CD8-positive, alpha-beta T cell (primary cell): ENCODE measurements at regions of chr5 and their contacts with region 1.

Region 1: GRCh38 chr5:113330533-113331208 is 104.1 kb downstream of the TSSK1B start:
- DNase-seq: peak in 3 of 9 experiments; percentile 9 to 81 (median 66)
- ATAC-seq: peak; percentile 83
- H3K4me3 ChIP-seq: no peak overlapping the region
- H3K4me3 Mint-ChIP-seq: peak overlapping the region; percentile 35
- H3K27ac ChIP-seq: no peak overlapping the region
- H3K27ac Mint-ChIP-seq: peak overlapping the region; percentile 12
- H3K4me1 ChIP-seq: peaks cover 7% of the 10 kb centered on the region
- H3K4me1 Mint-ChIP-seq: peaks cover 19% of the 10 kb centered on the region
- H3K27me3 ChIP-seq: no peaks in the 10 kb centered on the region
- H3K27me3 Mint-ChIP-seq: peaks cover 2% of the 10 kb centered on the region
- CTCF ChIP-seq: peak; percentile 58

Region 2: DNA sequence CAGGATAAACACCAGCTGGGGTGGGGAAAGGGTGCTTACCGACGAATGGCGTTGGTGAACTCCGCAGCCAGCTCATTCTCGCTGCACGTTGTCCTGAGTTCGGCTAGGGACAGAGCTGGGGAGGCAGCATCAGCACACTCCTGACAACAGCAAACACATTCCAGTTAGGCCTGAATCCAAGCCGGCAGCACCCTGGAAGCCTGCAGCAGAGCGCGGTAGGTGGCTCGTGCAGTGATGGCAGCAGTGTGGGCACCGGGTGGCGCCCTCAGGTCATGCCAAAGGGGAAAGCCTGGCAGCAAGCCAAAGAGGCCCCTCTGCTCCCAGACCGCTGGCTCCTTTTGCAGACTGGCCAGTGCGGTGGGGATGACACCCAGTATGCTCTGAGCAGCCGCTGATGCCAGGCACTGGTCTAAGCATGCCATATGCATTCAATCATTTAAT is 287.2 kb before region 1 on chr5:
- CTCF ChIA-PET with region 1: interaction called, 46 read pairs
- POLR2A ChIA-PET with region 1: no interaction called
- intact Hi-C with region 1: loop called (anchors 1 kb)
- DNase-seq: peak in 6 of 9 experiments; percentile 16 to 71 (median 40)
- ATAC-seq: no peak
- H3K4me3 ChIP-seq: no peak overlapping the region
- H3K4me3 Mint-ChIP-seq: no peak overlapping the region
- H3K27ac ChIP-seq: no peak overlapping the region
- H3K27ac Mint-ChIP-seq: no peak overlapping the region
- H3K4me1 ChIP-seq: no peaks in the 10 kb centered on the region
- H3K4me1 Mint-ChIP-seq: peaks cover 5% of the 10 kb centered on the region
- H3K27me3 ChIP-seq: no peaks in the 10 kb centered on the region
- H3K27me3 Mint-ChIP-seq: no peaks in the 10 kb centered on the region
- CTCF ChIP-seq: peak; percentile 24

Region 3: DNA sequence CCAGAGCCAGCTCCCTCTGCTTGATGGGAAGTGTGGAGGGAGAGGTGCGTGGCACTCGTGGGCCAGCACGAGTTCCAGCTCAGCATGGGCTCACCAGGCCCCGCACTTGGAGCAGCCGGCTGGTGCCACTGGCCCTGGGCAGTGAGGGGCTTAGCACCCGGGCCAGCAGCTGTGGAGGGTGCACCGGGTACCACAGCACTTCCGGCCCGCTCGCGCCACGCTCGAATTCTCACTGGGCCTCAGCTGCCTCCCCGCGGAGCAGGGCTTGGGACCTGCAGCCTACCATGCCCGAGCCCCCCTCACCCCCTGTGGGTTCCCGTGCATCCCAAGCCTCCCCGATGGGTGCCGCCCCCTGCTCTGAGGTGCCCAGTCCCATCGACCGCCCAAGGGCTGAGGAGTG is 255.7 kb before region 1 on chr5:
- CTCF ChIA-PET with region 1: interaction called, 26 read pairs
- POLR2A ChIA-PET with region 1: no interaction called
- intact Hi-C with region 1: loop called in 1 of 2 experiments (anchors 1 kb)
- DNase-seq: no peak
- ATAC-seq: no peak
- H3K4me3 ChIP-seq: no peak overlapping the region
- H3K4me3 Mint-ChIP-seq: no peak overlapping the region
- H3K27ac ChIP-seq: no peak overlapping the region
- H3K27ac Mint-ChIP-seq: no peak overlapping the region
- H3K4me1 ChIP-seq: peaks cover 26% of the 10 kb centered on the region
- H3K4me1 Mint-ChIP-seq: peaks cover 45% of the 10 kb centered on the region
- H3K27me3 ChIP-seq: no peaks in the 10 kb centered on the region
- H3K27me3 Mint-ChIP-seq: no peaks in the 10 kb centered on the region
- CTCF ChIP-seq: no peak

Region 4: GRCh38 chr5:113232667-113233066 is 98.0 kb before region 1 on chr5:
- CTCF ChIA-PET with region 1: no interaction called
- POLR2A ChIA-PET with region 1: no interaction called
- intact Hi-C with region 1: no loop called
- DNase-seq: no peak
- ATAC-seq: no peak
- H3K4me3 ChIP-seq: no peak overlapping the region
- H3K4me3 Mint-ChIP-seq: no peak overlapping the region
- H3K27ac ChIP-seq: no peak overlapping the region
- H3K27ac Mint-ChIP-seq: no peak overlapping the region
- H3K4me1 ChIP-seq: no peaks in the 10 kb centered on the region
- H3K4me1 Mint-ChIP-seq: peaks cover 20% of the 10 kb centered on the region
- H3K27me3 ChIP-seq: no peaks in the 10 kb centered on the region
- H3K27me3 Mint-ChIP-seq: peaks cover 4% of the 10 kb centered on the region
- CTCF ChIP-seq: no peak

Region 5: GRCh38 chr5:113320273-113320780 is 10.3 kb before region 1 on chr5:
- CTCF ChIA-PET with region 1: interaction called, 11 read pairs
- POLR2A ChIA-PET with region 1: no interaction called
- intact Hi-C with region 1: no loop called
- DNase-seq: no peak
- ATAC-seq: no peak
- H3K4me3 ChIP-seq: no peak overlapping the region
- H3K4me3 Mint-ChIP-seq: no peak overlapping the region
- H3K27ac ChIP-seq: no peak overlapping the region
- H3K27ac Mint-ChIP-seq: no peak overlapping the region
- H3K4me1 ChIP-seq: no peaks in the 10 kb centered on the region
- H3K4me1 Mint-ChIP-seq: no peaks in the 10 kb centered on the region
- H3K27me3 ChIP-seq: no peaks in the 10 kb centered on the region
- H3K27me3 Mint-ChIP-seq: no peaks in the 10 kb centered on the region
- CTCF ChIP-seq: no peak

Region 6: DNA sequence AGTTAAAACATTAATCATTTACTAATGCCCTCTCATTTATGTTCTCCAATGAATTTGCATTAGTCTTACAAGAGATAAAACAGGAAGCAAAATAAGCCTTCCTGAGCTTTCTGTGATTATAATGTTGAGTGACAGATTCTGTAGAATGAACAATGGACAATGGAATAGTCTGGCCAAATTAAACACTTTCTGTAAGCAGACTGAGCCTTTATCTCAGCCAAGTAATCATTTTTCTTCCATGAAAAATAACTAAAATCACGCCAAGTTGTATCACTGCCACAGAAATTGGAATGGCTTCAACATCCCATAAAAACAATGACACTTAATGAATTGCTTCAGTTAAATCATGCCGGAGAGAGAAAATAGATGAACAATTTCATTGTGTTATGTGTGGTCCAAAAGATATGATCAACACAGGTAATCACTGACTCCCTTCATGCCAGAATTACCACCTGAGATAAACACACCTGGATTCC is 41.1 kb after region 1 on chr5:
- CTCF ChIA-PET with region 1: no interaction called
- POLR2A ChIA-PET with region 1: no interaction called
- intact Hi-C with region 1: no loop called
- DNase-seq: no peak
- ATAC-seq: no peak
- H3K4me3 ChIP-seq: no peak overlapping the region
- H3K4me3 Mint-ChIP-seq: no peak overlapping the region
- H3K27ac ChIP-seq: no peak overlapping the region
- H3K27ac Mint-ChIP-seq: no peak overlapping the region
- H3K4me1 ChIP-seq: peaks cover 2% of the 10 kb centered on the region
- H3K4me1 Mint-ChIP-seq: peaks cover 13% of the 10 kb centered on the region
- H3K27me3 ChIP-seq: no peaks in the 10 kb centered on the region
- H3K27me3 Mint-ChIP-seq: peaks cover 10% of the 10 kb centered on the region
- CTCF ChIP-seq: no peak

Region 7: GRCh38 chr5:113606298-113607134 is 275.8 kb after region 1 on chr5:
- CTCF ChIA-PET with region 1: interaction called, 25 read pairs
- POLR2A ChIA-PET with region 1: no interaction called
- intact Hi-C with region 1: loop called (anchors 1 kb)
- DNase-seq: peak in 8 of 9 experiments; percentile 10 to 73 (median 42)
- ATAC-seq: peak; percentile 74
- H3K4me3 ChIP-seq: no peak overlapping the region
- H3K4me3 Mint-ChIP-seq: no peak overlapping the region
- H3K27ac ChIP-seq: no peak overlapping the region
- H3K27ac Mint-ChIP-seq: no peak overlapping the region
- H3K4me1 ChIP-seq: no peaks in the 10 kb centered on the region
- H3K4me1 Mint-ChIP-seq: peaks cover 4% of the 10 kb centered on the region
- H3K27me3 ChIP-seq: peaks cover 0 to 5% of the 10 kb centered on the region in 2 experiments
- H3K27me3 Mint-ChIP-seq: peaks cover 22% of the 10 kb centered on the region
- CTCF ChIP-seq: peak; percentile 75